Caco-2 (cell line): ENCODE measurements at regions of chr14 and their contacts with region 1.

Region 1: GRCh38 chr14:69850086-69850735 is 29.0 kb upstream of the SMOC1 start:
- DNase-seq: peak; percentile 79 to 86
- H3K4me3 ChIP-seq: peak overlapping the region; percentile 6
- H3K4me3 Mint-ChIP-seq: peak overlapping the region; percentile 61
- H3K27ac Mint-ChIP-seq: no peak overlapping the region
- H3K4me1 ChIP-seq: peaks cover 19% of the 10 kb centered on the region
- H3K4me1 Mint-ChIP-seq: peaks cover 9% of the 10 kb centered on the region
- H3K27me3 ChIP-seq: no peaks in the 10 kb centered on the region
- H3K27me3 Mint-ChIP-seq: no peaks in the 10 kb centered on the region
- CTCF ChIP-seq: peak in 1 of 2 experiments; percentile 24

Region 2: GRCh38 chr14:69780952-69781351 is 69.3 kb before region 1 on chr14:
- CTCF ChIA-PET with region 1: no interaction called
- POLR2A ChIA-PET with region 1: interaction called, 11 read pairs
- intact Hi-C with region 1: no loop called
- DNase-seq: no peak
- H3K4me3 ChIP-seq: no peak overlapping the region
- H3K4me3 Mint-ChIP-seq: no peak overlapping the region
- H3K27ac Mint-ChIP-seq: peak overlapping the region; percentile 11
- H3K4me1 ChIP-seq: no peaks in the 10 kb centered on the region
- H3K4me1 Mint-ChIP-seq: no peaks in the 10 kb centered on the region
- H3K27me3 ChIP-seq: no peaks in the 10 kb centered on the region
- H3K27me3 Mint-ChIP-seq: no peaks in the 10 kb centered on the region
- CTCF ChIP-seq: no peak

Region 3: DNA sequence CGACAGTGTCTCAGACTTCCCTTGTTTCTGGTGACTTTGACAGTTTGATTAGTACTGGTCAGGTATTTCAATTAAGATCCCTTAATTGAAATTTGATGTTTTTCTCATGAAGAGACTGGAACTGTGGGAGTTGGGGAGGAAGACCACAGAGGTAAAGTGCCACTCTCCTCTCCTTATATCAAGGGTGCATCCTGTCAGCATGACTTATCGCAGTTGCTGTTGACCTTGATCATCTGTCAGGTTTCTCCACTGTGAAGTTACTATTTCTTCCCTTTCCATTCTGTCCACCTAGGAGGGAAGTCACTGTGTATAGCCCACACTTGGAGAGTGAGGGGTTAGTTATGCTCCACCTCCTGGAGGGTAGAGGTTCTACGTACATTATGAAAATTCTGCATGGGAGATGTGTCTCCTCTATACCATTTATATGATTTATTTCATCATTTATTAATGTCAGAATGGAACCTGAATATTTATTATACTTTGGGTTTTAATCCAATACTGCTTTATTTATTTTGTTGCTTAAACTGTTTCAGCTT is 11.3 kb before region 1 on chr14:
- CTCF ChIA-PET with region 1: no interaction called
- POLR2A ChIA-PET with region 1: no interaction called
- intact Hi-C with region 1: no loop called
- DNase-seq: no peak
- H3K4me3 ChIP-seq: no peak overlapping the region
- H3K4me3 Mint-ChIP-seq: no peak overlapping the region
- H3K27ac Mint-ChIP-seq: no peak overlapping the region
- H3K4me1 ChIP-seq: no peaks in the 10 kb centered on the region
- H3K4me1 Mint-ChIP-seq: no peaks in the 10 kb centered on the region
- H3K27me3 ChIP-seq: no peaks in the 10 kb centered on the region
- H3K27me3 Mint-ChIP-seq: no peaks in the 10 kb centered on the region
- CTCF ChIP-seq: no peak

Region 4: GRCh38 chr14:69985456-69985855 is 135.2 kb after region 1 on chr14:
- CTCF ChIA-PET with region 1: no interaction called
- POLR2A ChIA-PET with region 1: no interaction called
- intact Hi-C with region 1: no loop called
- DNase-seq: no peak
- H3K4me3 ChIP-seq: no peak overlapping the region
- H3K4me3 Mint-ChIP-seq: no peak overlapping the region
- H3K27ac Mint-ChIP-seq: no peak overlapping the region
- H3K4me1 ChIP-seq: peaks cover 21% of the 10 kb centered on the region
- H3K4me1 Mint-ChIP-seq: peaks cover 16% of the 10 kb centered on the region
- H3K27me3 ChIP-seq: no peaks in the 10 kb centered on the region
- H3K27me3 Mint-ChIP-seq: no peaks in the 10 kb centered on the region
- CTCF ChIP-seq: no peak